H1 (cell line): ENCODE measurements at regions of chr12 and their contacts with region 1.

Region 1: GRCh38 chr12:57535764-57536596 is 11.0 kb downstream of the DCTN2 start:
- DNase-seq: no peak
- H3K4me3 ChIP-seq: no peak overlapping the region
- H3K27ac ChIP-seq: no peak overlapping the region
- H3K4me1 ChIP-seq: peaks cover 0 to 2% (median 0%) of the 10 kb centered on the region in 4 experiments; a peak in 1 of 7 replicates
- H3K27me3 ChIP-seq: peaks cover 0 to 1% (median 0%) of the 10 kb centered on the region in 4 experiments; a peak in 1 of 7 replicates
- CTCF ChIP-seq: no peak
- EP300 ChIP-seq: no peak
- POLR2A ChIP-seq: no peak
- RAD21 ChIP-seq: no peak

Region 2: DNA sequence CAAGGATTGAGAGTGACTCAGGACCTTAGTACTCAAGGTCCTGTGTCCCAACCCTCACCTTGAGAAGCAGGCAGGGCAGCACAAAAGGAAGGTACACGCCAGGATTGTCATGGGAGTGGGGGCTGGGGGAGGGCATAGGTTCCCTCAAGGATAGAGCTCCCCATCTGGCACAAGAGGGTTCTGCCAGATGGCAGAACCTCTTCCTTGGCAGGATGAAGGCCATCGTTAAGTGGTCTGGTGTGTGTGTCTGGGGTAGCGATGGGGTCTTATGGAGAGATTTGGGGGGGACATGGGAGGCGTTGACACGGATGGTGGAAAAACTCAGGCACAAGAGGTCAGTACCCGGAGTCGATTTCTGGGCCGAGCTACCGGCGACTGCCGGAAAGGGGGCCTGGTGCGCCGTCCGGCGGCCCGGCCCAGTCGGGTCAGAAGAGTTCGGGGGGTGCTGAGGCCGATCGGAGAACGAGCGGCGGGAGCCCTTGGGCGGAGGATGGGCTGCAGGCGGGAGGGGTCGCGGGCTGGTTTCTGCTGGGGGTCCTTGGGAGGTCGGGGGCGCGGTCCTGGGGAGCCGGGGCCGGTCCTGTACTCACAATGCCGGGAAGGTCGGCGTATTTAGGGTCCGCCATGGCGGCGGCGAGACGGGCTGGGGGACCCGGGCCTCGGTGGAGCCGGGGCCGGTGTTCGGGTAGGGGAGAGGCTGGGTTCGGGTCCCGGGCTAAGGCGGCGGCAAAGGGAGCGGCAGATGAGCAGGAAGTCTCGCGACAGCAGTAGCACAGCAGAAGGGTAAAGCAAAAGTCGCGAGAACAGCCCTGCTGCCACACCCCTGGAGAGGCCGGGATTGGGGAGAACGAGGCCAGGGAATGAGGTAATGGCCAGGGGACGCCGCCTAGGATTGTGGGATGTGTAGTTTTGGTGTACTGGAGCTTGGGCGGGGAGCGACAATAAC is 10.7 kb after region 1 on chr12 and contains the start of gene DCTN2:
- CTCF ChIA-PET with region 1: interaction called, 8 read pairs
- POLR2A ChIA-PET with region 1: interaction called, 65 read pairs
- DNase-seq: peak; percentile 83 to 91
- H3K4me3 ChIP-seq: peak within 1 kb of the TSS; percentile 63 to 90 (median 81)
- H3K27ac ChIP-seq: peak within 1 kb of the TSS; percentile 44; the same call in 1 of the 2 replicates
- H3K4me1 ChIP-seq: peaks cover 6 to 18% (median 10%) of the 10 kb centered on the region in 4 experiments; a peak in 6 of 7 replicates
- H3K27me3 ChIP-seq: peaks cover 0 to 5% (median 3%) of the 10 kb centered on the region in 4 experiments; a peak in 2 of 7 replicates
- CTCF ChIP-seq: peak in 1 of 3 experiments; percentile 23; a peak in 1 of 4 replicates
- EP300 ChIP-seq: no peak
- POLR2A ChIP-seq: no peak; a peak in 1 of 3 replicates
- RAD21 ChIP-seq: no peak
- total RNA-seq, gene DCTN2: 89.3 and 90.3 TPM in 2 replicates